Caco-2 (cell line): ENCODE measurements at regions of chr12 and their contacts with region 1.

Region 1: GRCh38 chr12:121536899-121537813 is 43.7 kb downstream of the KDM2B start:
- DNase-seq: peak; percentile 79 to 85
- H3K4me3 ChIP-seq: peak overlapping the region; percentile 65
- H3K4me3 Mint-ChIP-seq: peak overlapping the region; percentile 70
- H3K27ac Mint-ChIP-seq: peak overlapping the region; percentile 45
- H3K4me1 ChIP-seq: peaks cover 21% of the 10 kb centered on the region
- H3K4me1 Mint-ChIP-seq: peaks cover 17% of the 10 kb centered on the region
- H3K27me3 ChIP-seq: no peaks in the 10 kb centered on the region
- H3K27me3 Mint-ChIP-seq: no peaks in the 10 kb centered on the region
- CTCF ChIP-seq: no peak

Region 2: DNA sequence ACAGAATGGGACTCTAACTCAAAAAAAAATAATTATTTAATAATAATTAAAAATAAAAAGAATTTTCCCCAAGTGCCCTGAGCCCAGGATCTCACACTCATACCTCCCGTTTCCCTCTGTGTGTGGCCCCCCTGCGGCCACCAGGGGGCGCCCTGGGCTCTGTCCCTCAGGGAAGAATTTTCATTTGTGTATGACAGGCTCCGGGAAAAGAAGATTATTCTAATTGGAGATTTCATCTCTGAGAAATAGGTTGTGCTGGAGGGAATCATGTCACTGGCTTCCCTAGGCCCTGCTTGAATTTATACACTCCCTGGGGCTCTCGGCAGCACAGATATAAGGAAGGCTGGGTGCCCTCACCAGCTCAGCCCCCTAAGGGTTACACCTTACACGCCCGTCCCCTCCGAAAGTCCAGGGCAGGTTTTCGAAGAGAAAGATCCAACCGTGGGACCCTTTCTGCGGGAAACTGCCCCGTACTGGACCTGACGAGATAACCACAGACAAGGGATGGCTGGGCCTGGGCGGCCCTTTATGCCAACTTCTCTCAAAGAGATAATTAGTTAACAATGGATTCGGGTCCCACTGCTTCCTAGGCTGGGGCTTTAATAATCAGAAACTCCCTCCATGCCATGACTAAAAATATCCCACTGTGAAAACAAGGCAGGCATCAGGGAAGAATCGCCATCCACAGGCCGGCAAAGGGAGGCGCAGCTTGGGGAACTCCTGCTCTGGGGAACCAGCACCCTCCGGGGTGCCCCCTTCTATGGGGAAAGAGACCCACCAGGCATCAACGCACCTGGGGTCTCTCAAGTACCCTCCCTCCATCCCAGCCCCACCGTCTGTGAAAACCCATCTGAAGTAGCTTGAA is 37.0 kb before region 1 on chr12:
- CTCF ChIA-PET with region 1: interaction called, 9 read pairs
- POLR2A ChIA-PET with region 1: no interaction called
- intact Hi-C with region 1: loop called (anchors 5 kb)
- DNase-seq: peak; percentile 61 to 80
- H3K4me3 ChIP-seq: no peak overlapping the region
- H3K4me3 Mint-ChIP-seq: no peak overlapping the region
- H3K27ac Mint-ChIP-seq: no peak overlapping the region
- H3K4me1 ChIP-seq: no peaks in the 10 kb centered on the region
- H3K4me1 Mint-ChIP-seq: no peaks in the 10 kb centered on the region
- H3K27me3 ChIP-seq: no peaks in the 10 kb centered on the region
- H3K27me3 Mint-ChIP-seq: no peaks in the 10 kb centered on the region
- CTCF ChIP-seq: peak; percentile 97

Region 3: GRCh38 chr12:121560392-121561008 is 23.3 kb after region 1 on chr12:
- CTCF ChIA-PET with region 1: no interaction called
- POLR2A ChIA-PET with region 1: no interaction called
- intact Hi-C with region 1: loop called (anchors 1 kb)
- DNase-seq: no peak
- H3K4me3 ChIP-seq: no peak overlapping the region
- H3K4me3 Mint-ChIP-seq: no peak overlapping the region
- H3K27ac Mint-ChIP-seq: no peak overlapping the region
- H3K4me1 ChIP-seq: no peaks in the 10 kb centered on the region
- H3K4me1 Mint-ChIP-seq: no peaks in the 10 kb centered on the region
- H3K27me3 ChIP-seq: no peaks in the 10 kb centered on the region
- H3K27me3 Mint-ChIP-seq: no peaks in the 10 kb centered on the region
- CTCF ChIP-seq: no peak

Region 4: GRCh38 chr12:121600702-121601336 is 63.7 kb after region 1 on chr12:
- CTCF ChIA-PET with region 1: interaction called, 8 read pairs
- POLR2A ChIA-PET with region 1: no interaction called
- intact Hi-C with region 1: loop called (anchors 5 kb)
- DNase-seq: peak; percentile 89 to 97
- H3K4me3 ChIP-seq: no peak overlapping the region
- H3K4me3 Mint-ChIP-seq: peak overlapping the region; percentile 15
- H3K27ac Mint-ChIP-seq: peak overlapping the region; percentile 76
- H3K4me1 ChIP-seq: peaks cover 47% of the 10 kb centered on the region
- H3K4me1 Mint-ChIP-seq: peaks cover 26% of the 10 kb centered on the region
- H3K27me3 ChIP-seq: no peaks in the 10 kb centered on the region
- H3K27me3 Mint-ChIP-seq: no peaks in the 10 kb centered on the region
- CTCF ChIP-seq: no peak

Region 5: DNA sequence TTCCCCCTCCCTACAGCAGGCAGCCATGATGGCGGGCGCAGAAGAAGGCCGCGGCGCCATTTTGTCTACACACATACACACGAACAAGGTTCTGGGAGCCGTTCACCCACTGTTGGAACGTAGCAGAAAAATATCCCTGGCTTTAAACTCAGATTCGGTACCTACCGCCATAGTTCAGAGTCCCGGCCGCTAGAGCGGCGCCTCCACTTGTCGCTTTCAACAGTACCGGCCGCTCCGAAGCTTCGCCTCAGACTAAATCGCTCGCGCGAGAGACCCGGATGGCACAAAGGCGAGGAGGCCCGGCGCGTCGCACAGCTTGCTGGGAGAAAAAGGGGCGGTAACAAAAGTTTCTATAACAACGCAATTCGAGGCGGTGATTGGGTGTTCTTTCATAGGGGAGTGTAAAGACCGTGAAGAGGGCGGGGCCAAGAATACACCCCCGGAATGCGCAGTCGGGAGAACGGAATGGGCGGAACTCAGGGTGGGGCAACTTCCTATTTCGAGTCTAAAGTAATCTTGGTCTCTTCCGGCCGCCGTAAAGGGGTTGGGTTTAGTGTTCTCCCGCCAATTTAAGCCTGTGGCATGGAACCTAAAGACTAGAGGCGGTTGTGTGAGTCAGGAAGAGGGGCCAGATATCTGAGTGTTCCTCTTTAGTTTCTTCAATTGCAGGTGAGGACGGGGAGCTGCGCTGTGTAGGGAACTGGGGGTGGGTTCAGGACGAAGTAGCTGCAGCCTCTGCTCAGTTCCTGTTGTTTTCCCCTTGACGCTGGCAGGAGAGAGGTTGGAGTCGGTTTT is 989.7 kb after region 1 on chr12 and contains the starts of genes KNTC1 and RSRC2:
- CTCF ChIA-PET with region 1: no interaction called
- POLR2A ChIA-PET with region 1: interaction called, 10 read pairs
- intact Hi-C with region 1: no loop called
- DNase-seq: peak; percentile 98 to 100
- H3K4me3 ChIP-seq: peak within 1 kb of the TSS; percentile 88
- H3K4me3 Mint-ChIP-seq: no peak within 1 kb of the TSS
- H3K27ac Mint-ChIP-seq: no peak within 1 kb of the TSS
- H3K4me1 ChIP-seq: peaks cover 20% of the 10 kb centered on the region
- H3K4me1 Mint-ChIP-seq: peaks cover 8% of the 10 kb centered on the region
- H3K27me3 ChIP-seq: no peaks in the 10 kb centered on the region
- H3K27me3 Mint-ChIP-seq: no peaks in the 10 kb centered on the region
- CTCF ChIP-seq: no peak
- total RNA-seq, gene KNTC1: 55.8 and 57.0 TPM in 2 replicates
- total RNA-seq, gene RSRC2: 77.9 and 79.0 TPM in 2 replicates